Activated CD4-positive, alpha-beta T cell treated with anti-CD3 and anti-CD28 coated beads, Interleukin-2, amount 10 ng/mL, durations not matched to agents 24 days and 14 days (primary cell): ENCODE measurements at regions of chr18 and their contacts with region 1.

Region 1: DNA sequence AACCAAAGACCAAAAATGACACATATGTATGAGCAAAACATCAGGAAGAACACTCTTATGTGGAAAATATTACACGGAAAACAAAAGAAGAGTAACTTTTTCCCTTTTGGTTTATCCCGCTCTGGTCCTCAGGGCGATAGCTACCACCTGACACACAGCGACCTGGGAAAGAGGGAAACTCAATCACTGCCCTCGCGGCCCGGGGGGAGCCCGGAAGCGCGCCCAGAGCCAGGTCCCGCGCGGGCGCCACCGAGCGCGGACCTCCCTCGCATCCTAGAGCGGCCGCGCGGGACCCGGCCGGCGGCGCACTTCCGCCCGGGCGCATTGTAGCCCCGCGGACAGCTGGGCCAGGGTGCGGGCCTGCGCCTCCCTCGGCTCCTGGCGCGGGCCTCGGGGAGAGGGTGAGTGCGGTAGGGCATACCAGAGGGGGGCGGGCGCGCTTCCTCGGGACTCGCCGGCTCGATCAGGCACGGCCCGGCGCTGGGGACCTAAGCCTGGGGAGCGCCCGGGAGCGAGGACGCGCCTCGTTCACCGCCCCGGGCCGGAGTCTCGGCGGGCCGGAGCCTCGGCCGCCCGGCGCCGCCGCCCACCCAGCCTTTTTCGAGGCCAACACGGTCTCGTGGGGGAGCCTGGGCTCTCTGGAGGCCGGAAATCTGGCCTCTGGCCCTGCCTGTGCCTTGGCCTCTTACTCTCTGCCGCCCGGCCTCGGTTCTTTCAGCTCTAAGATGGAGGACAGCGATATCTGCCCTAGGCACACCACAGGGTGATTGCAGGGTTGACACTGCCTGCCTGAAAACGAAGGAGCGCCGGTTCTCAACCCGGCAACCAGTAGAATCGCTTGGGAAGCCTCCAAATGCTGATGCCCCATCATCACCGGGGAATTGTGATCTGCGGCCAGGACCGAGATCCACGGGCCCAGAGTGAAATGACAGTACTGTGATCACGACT is at the start of gene ELAC1:
- DNase-seq: peak; percentile 91
- H3K4me3 Mint-ChIP-seq: peak within 1 kb of the TSS; percentile 97
- H3K27ac Mint-ChIP-seq: peak within 1 kb of the TSS; percentile 97
- H3K4me1 Mint-ChIP-seq: peaks cover 22% of the 10 kb centered on the region
- H3K27me3 Mint-ChIP-seq: peaks cover 2% of the 10 kb centered on the region
- total RNA-seq, gene ELAC1: 6.8 and 7.0 TPM in 2 replicates

Region 2: GRCh38 chr18:50878345-50879301 is 89.4 kb before region 1 on chr18 and contains the start of gene ME2:
- intact Hi-C with region 1: loop called (anchors 1 kb)
- DNase-seq: peak; percentile 98
- H3K4me3 Mint-ChIP-seq: peak within 1 kb of the TSS; percentile 95
- H3K27ac Mint-ChIP-seq: peak within 1 kb of the TSS; percentile 99
- H3K4me1 Mint-ChIP-seq: peaks cover 24% of the 10 kb centered on the region
- H3K27me3 Mint-ChIP-seq: peaks cover 4% of the 10 kb centered on the region
- total RNA-seq, gene ME2: 141 and 143 TPM in 2 replicates

Region 3: GRCh38 chr18:50933684-50934083 is 34.3 kb before region 1 on chr18:
- intact Hi-C with region 1: loop called (anchors 5 kb)
- DNase-seq: peak; percentile 34
- H3K4me3 Mint-ChIP-seq: no peak overlapping the region
- H3K27ac Mint-ChIP-seq: no peak overlapping the region
- H3K4me1 Mint-ChIP-seq: peaks cover 4% of the 10 kb centered on the region
- H3K27me3 Mint-ChIP-seq: no peaks in the 10 kb centered on the region

Region 4: GRCh38 chr18:51051105-51051712 is 83.2 kb after region 1 on chr18:
- intact Hi-C with region 1: loop called (anchors 1 kb)
- DNase-seq: peak; percentile 76
- H3K4me3 Mint-ChIP-seq: no peak overlapping the region
- H3K27ac Mint-ChIP-seq: peak overlapping the region; percentile 34
- H3K4me1 Mint-ChIP-seq: peaks cover 29% of the 10 kb centered on the region
- H3K27me3 Mint-ChIP-seq: no peaks in the 10 kb centered on the region

Region 5: GRCh38 chr18:51361130-51361860 is 393.3 kb after region 1 on chr18:
- intact Hi-C with region 1: no loop called
- DNase-seq: no peak
- H3K4me3 Mint-ChIP-seq: peak overlapping the region; percentile 18
- H3K27ac Mint-ChIP-seq: no peak overlapping the region
- H3K4me1 Mint-ChIP-seq: peaks cover 9% of the 10 kb centered on the region
- H3K27me3 Mint-ChIP-seq: peaks cover 4% of the 10 kb centered on the region